HCT116 (cell line): ENCODE measurements at regions of chr1 and their contacts with region 1.

Region 1: DNA sequence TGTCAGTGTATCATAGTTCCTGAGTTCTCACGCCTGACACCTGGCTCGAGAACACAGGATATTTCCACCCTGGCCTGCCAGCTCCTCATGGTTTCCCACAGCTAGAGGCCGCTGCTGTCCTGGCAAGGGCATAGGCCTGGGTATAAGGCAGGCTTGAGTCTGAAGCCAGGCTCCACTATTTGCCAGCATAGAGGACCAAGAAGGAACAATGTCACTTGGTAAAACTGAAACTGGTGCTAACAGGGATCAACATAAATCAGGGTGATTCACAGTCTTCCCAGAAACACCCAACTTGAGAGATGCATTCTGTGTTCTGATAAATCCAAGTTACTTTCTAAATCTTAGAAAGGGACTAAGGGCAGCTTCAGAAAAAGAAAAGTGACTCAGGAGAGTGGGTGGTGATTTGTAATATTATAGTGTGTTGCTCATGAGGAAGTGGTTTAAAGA is 6.9 kb upstream of the S100A2 start:
- DNase-seq: peak; percentile 84
- ATAC-seq: peak; percentile 82
- H3K4me3 ChIP-seq: peak overlapping the region in 1 of 2 experiments; percentile 20; a peak in 1 of 4 replicates
- H3K27ac ChIP-seq: peak overlapping the region; percentile 57
- H3K4me1 ChIP-seq: peaks cover 32 to 53% of the 10 kb centered on the region in 2 experiments
- H3K27me3 ChIP-seq: no peaks in the 10 kb centered on the region
- CTCF ChIP-seq: peak in 2 of 3 experiments; percentile 91 to 97; a peak in 4 of 6 replicates
- POLR2A ChIP-seq: no peak
- RAD21 ChIP-seq: no peak

Region 2: GRCh38 chr1:152459596-152460528 is 1112.7 kb before region 1 on chr1:
- CTCF ChIA-PET with region 1: no interaction called
- POLR2A ChIA-PET with region 1: no interaction called
- RAD21 ChIA-PET with region 1: no interaction called
- intact Hi-C with region 1: no loop called
- DNase-seq: peak; percentile 64
- ATAC-seq: peak; percentile 80
- H3K4me3 ChIP-seq: no peak overlapping the region
- H3K27ac ChIP-seq: no peak overlapping the region
- H3K4me1 ChIP-seq: peaks cover 0 to 11% of the 10 kb centered on the region in 2 experiments; a peak in 2 of 4 replicates
- H3K27me3 ChIP-seq: no peaks in the 10 kb centered on the region
- CTCF ChIP-seq: peak; percentile 39 to 88 (median 88); a peak in 4 of 6 replicates
- POLR2A ChIP-seq: no peak
- RAD21 ChIP-seq: no peak; the same call in 1 of the 2 replicates

Region 3: GRCh38 chr1:153040950-153041631 is 531.5 kb before region 1 on chr1 and contains the start of gene SPRR2D:
- CTCF ChIA-PET with region 1: no interaction called
- POLR2A ChIA-PET with region 1: no interaction called
- RAD21 ChIA-PET with region 1: no interaction called
- intact Hi-C with region 1: no loop called
- DNase-seq: peak; percentile 31
- ATAC-seq: no peak
- H3K4me3 ChIP-seq: no peak within 1 kb of the TSS
- H3K27ac ChIP-seq: no peak within 1 kb of the TSS
- H3K4me1 ChIP-seq: no peaks in the 10 kb centered on the region
- H3K27me3 ChIP-seq: peaks cover 29% of the 10 kb centered on the region
- CTCF ChIP-seq: no peak
- POLR2A ChIP-seq: no peak
- RAD21 ChIP-seq: no peak
- total RNA-seq, gene SPRR2D: 6.9 TPM

Region 4: DNA sequence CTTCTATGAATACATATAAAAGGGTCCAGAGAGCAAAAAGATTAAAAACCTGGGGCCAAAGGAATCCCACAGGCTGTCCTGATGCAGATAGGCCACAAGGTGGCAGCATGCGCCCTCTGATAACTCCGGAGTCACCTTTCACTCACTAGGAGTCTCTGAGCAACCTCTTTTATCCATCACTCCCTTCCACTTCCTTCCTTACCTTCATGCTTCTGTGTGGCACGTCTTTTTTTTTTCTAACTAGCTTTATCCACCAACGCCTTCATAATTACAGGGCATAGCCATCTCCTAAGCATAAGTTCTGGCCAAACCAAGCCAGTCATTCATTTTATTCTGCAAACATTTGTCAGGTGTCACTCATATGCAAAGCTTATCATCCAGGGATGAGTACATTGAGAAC is 220.1 kb before region 1 on chr1:
- CTCF ChIA-PET with region 1: interaction called, 3 read pairs
- POLR2A ChIA-PET with region 1: interaction called, 3 read pairs
- RAD21 ChIA-PET with region 1: no interaction called
- intact Hi-C with region 1: loop called (anchors 2 kb)
- DNase-seq: peak; percentile 55
- ATAC-seq: peak; percentile 68
- H3K4me3 ChIP-seq: no peak overlapping the region
- H3K27ac ChIP-seq: no peak overlapping the region
- H3K4me1 ChIP-seq: no peaks in the 10 kb centered on the region; a peak in 1 of 4 replicates
- H3K27me3 ChIP-seq: peaks cover 22% of the 10 kb centered on the region
- CTCF ChIP-seq: peak; percentile 82 to 85 (median 84)
- POLR2A ChIP-seq: no peak
- RAD21 ChIP-seq: peak; percentile 88

Region 5: GRCh38 chr1:153545067-153546055 is 27.2 kb before region 1 on chr1 and contains the start of gene S100A4:
- CTCF ChIA-PET with region 1: interaction called, 7 read pairs
- POLR2A ChIA-PET with region 1: interaction called, 19 read pairs
- RAD21 ChIA-PET with region 1: interaction called, 4 read pairs
- intact Hi-C with region 1: no loop called
- DNase-seq: peak; percentile 87
- ATAC-seq: peak; percentile 71
- H3K4me3 ChIP-seq: peak within 1 kb of the TSS; percentile 50 to 54
- H3K27ac ChIP-seq: peak within 1 kb of the TSS; percentile 97
- H3K4me1 ChIP-seq: peaks cover 96 to 100% of the 10 kb centered on the region in 2 experiments
- H3K27me3 ChIP-seq: no peaks in the 10 kb centered on the region
- CTCF ChIP-seq: no peak
- POLR2A ChIP-seq: peak; percentile 60
- RAD21 ChIP-seq: no peak
- total RNA-seq, gene S100A4: 384 TPM

Region 6: DNA sequence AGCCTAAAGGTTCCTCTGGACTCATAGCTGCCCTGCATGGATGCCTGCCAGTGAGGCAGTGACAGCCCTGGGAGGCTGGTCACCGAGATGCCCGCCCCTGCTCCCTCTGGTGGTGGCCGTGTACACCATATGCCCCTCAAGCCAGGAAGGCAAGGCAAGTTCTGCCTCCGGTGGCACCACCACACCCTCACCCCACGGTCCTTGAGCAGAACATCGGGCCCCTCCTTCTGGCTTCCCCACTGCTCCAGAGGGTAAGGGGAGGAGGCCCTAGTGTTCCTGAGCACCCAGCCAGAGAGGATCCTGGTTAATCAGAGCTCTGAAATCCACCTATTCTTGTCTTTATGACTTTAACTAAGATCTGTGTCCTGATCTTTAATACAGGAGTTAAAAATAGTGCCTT is 45.1 kb after region 1 on chr1:
- CTCF ChIA-PET with region 1: interaction called, 33 read pairs
- POLR2A ChIA-PET with region 1: interaction called, 22 read pairs
- RAD21 ChIA-PET with region 1: interaction called, 5 to 8 read pairs
- intact Hi-C with region 1: loop called (anchors 2 kb)
- DNase-seq: peak; percentile 57
- ATAC-seq: peak; percentile 63
- H3K4me3 ChIP-seq: no peak overlapping the region
- H3K27ac ChIP-seq: peak overlapping the region; percentile 79
- H3K4me1 ChIP-seq: peaks cover 39 to 53% of the 10 kb centered on the region in 2 experiments
- H3K27me3 ChIP-seq: no peaks in the 10 kb centered on the region
- CTCF ChIP-seq: peak in 2 of 3 experiments; percentile 66 to 68; a peak in 4 of 6 replicates
- POLR2A ChIP-seq: no peak
- RAD21 ChIP-seq: no peak

Region 7: GRCh38 chr1:153633716-153634665 is 61.4 kb after region 1 on chr1 and contains the start of gene CHTOP:
- CTCF ChIA-PET with region 1: interaction called, 16 read pairs
- POLR2A ChIA-PET with region 1: interaction called, 16 read pairs
- RAD21 ChIA-PET with region 1: interaction called, 3 to 5 read pairs
- intact Hi-C with region 1: no loop called
- DNase-seq: peak; percentile 98
- ATAC-seq: peak; percentile 91
- H3K4me3 ChIP-seq: peak within 1 kb of the TSS; percentile 91 to 95
- H3K27ac ChIP-seq: peak within 1 kb of the TSS; percentile 100
- H3K4me1 ChIP-seq: peaks cover 9 to 22% of the 10 kb centered on the region in 2 experiments
- H3K27me3 ChIP-seq: no peaks in the 10 kb centered on the region
- CTCF ChIP-seq: no peak
- POLR2A ChIP-seq: peak; percentile 73
- RAD21 ChIP-seq: no peak
- total RNA-seq, gene CHTOP: 110 TPM

Region 8: DNA sequence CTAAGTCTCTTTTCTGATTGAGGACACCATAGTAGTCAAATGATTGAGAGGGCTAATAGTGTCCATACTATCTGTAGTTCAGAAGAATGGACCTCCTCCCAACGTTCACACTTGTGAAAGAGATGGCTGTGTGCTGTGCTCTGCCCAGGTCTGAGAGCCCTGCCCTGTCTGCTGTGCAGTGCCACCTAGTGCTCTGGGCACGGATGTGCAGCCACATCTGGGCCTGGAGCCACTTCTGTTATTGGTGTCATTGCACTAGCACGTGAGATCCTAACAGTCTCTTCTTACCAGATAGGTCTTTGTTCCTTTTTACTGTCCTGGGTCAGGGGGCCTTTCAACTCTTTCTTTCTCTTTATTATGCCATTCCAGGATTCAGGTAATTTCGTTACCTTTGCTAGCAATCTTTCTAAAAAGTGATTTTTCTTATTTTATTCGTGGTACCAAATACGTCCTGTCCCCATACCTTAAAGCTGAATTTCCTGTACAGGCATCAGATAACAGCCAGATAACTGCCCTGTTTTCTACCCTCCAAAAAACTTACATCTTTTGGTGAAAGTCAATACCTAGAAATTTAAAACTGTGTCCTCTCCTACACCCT is 176.9 kb after region 1 on chr1:
- CTCF ChIA-PET with region 1: interaction called, 4 read pairs
- POLR2A ChIA-PET with region 1: no interaction called
- RAD21 ChIA-PET with region 1: no interaction called
- intact Hi-C with region 1: loop called (anchors 1 kb)
- DNase-seq: peak; percentile 45
- ATAC-seq: peak; percentile 100
- H3K4me3 ChIP-seq: no peak overlapping the region
- H3K27ac ChIP-seq: no peak overlapping the region
- H3K4me1 ChIP-seq: no peaks in the 10 kb centered on the region
- H3K27me3 ChIP-seq: no peaks in the 10 kb centered on the region
- CTCF ChIP-seq: peak; percentile 86 to 94 (median 94)
- POLR2A ChIP-seq: no peak
- RAD21 ChIP-seq: peak; percentile 93